A549 (cell line): ENCODE measurements at regions of chr10 and their contacts with region 1.

Region 1: DNA sequence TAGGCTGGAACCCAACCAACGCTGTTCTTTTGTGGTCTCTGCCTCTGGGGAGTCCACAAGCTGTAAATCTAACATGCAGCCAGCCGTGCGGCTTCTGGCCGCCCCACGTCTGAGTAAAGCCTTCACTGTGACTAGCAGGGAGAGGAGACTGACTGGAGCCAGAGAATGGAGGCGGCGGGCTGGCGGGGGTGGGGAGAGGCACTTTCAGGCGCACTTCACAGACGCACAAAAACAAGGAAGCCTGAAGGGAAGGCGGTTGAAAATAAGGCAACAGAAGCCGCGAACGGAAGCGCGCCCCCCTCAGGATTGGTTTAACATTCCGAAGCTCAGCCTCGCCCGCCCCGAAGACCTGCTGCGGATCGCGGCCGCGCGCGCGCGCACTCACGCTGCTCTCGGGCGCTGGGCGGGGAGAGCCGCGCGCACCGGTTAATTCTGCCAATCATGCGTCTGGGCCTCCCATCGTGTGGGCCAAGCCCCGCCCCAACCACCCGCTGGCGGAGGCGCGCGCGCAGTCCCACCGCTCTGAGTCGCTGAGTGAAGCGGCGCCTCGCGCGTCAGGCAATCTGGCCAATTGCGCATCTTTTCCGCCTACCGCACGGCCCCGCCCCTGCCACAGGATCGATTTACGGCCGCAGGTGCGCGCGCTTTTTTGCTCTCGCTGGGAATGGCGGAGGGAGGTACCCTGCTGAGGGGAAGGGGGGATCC is at the start of gene SFR1:
- DNase-seq: peak; percentile 87 to 99
- ATAC-seq: peak; percentile 82 to 88
- H3K4me3 ChIP-seq: peak within 1 kb of the TSS; percentile 88
- H3K27ac ChIP-seq: peak within 1 kb of the TSS; percentile 98
- H3K4me1 ChIP-seq: peaks cover 51% of the 10 kb centered on the region
- CTCF ChIP-seq: peak; percentile 69
- EP300 ChIP-seq: no peak
- POLR2A ChIP-seq: peak; percentile 84
- RAD21 ChIP-seq: peak; percentile 67 to 83
- polyA plus RNA-seq, gene SFR1: 11.2 and 17.6 TPM in 2 replicates

Region 2: GRCh38 chr10:104045151-104046089 is 76.3 kb before region 1 on chr10:
- CTCF ChIA-PET with region 1: interaction called, 166 read pairs
- POLR2A ChIA-PET with region 1: interaction called, 32 read pairs
- DNase-seq: peak; percentile 78 to 86
- ATAC-seq: peak; percentile 87 to 96
- H3K4me3 ChIP-seq: no peak overlapping the region
- H3K27ac ChIP-seq: peak overlapping the region; percentile 48 to 79; a peak in 5 of 6 replicates
- H3K4me1 ChIP-seq: peaks cover 27% of the 10 kb centered on the region
- CTCF ChIP-seq: peak; percentile 93
- EP300 ChIP-seq: no peak
- POLR2A ChIP-seq: no peak
- RAD21 ChIP-seq: peak; percentile 99

Region 3: DNA sequence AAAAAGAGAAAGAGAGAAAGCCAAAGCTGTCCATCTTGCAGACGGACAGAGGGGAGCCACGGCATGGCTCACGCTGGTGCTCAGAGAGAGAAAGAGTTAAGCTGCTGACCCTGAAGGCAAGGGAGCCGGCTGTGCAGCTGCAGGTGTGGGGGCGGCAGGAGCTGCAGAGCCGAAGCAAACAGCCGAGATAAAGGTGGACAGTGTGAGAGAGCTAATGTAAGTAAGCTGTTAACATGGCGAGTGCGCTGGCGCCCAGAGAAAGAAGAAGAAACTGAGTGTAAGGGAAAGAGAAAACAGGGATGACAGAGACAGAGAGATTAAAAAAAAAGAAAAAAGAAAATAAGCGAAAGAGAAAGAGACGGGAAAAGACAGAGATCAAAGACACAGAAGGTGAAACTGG is 54.1 kb before region 1 on chr10:
- CTCF ChIA-PET with region 1: interaction called, 10 read pairs
- POLR2A ChIA-PET with region 1: interaction called, 8 read pairs
- DNase-seq: no peak
- ATAC-seq: no peak
- H3K4me3 ChIP-seq: no peak overlapping the region
- H3K27ac ChIP-seq: no peak overlapping the region
- H3K4me1 ChIP-seq: no peaks in the 10 kb centered on the region
- CTCF ChIP-seq: no peak
- EP300 ChIP-seq: no peak
- POLR2A ChIP-seq: no peak
- RAD21 ChIP-seq: no peak

Region 4: GRCh38 chr10:104090611-104091010 is 31.1 kb before region 1 on chr10:
- CTCF ChIA-PET with region 1: interaction called, 15 read pairs
- POLR2A ChIA-PET with region 1: interaction called, 5 read pairs
- DNase-seq: no peak
- ATAC-seq: no peak
- H3K4me3 ChIP-seq: no peak overlapping the region
- H3K27ac ChIP-seq: no peak overlapping the region
- H3K4me1 ChIP-seq: peaks cover under 1% of the 10 kb centered on the region; the same call in 1 of the 3 replicates
- CTCF ChIP-seq: no peak
- EP300 ChIP-seq: no peak
- POLR2A ChIP-seq: no peak
- RAD21 ChIP-seq: no peak

Region 5: GRCh38 chr10:104109908-104110662 is 11.6 kb before region 1 on chr10:
- CTCF ChIA-PET with region 1: interaction called, 24 read pairs
- POLR2A ChIA-PET with region 1: interaction called, 59 read pairs
- DNase-seq: peak; percentile 62 to 92
- ATAC-seq: peak; percentile 98 to 99
- H3K4me3 ChIP-seq: no peak overlapping the region
- H3K27ac ChIP-seq: peak overlapping the region; percentile 89 to 93
- H3K4me1 ChIP-seq: peaks cover 33% of the 10 kb centered on the region
- CTCF ChIP-seq: no peak
- EP300 ChIP-seq: peak in 1 of 2 experiments; percentile 46; a peak in 2 of 5 replicates
- POLR2A ChIP-seq: no peak
- RAD21 ChIP-seq: 0 out of 5 replicates have a peak, but pooled peaks of 1 of the 2 experiments have one; percentile 35

Region 6: DNA sequence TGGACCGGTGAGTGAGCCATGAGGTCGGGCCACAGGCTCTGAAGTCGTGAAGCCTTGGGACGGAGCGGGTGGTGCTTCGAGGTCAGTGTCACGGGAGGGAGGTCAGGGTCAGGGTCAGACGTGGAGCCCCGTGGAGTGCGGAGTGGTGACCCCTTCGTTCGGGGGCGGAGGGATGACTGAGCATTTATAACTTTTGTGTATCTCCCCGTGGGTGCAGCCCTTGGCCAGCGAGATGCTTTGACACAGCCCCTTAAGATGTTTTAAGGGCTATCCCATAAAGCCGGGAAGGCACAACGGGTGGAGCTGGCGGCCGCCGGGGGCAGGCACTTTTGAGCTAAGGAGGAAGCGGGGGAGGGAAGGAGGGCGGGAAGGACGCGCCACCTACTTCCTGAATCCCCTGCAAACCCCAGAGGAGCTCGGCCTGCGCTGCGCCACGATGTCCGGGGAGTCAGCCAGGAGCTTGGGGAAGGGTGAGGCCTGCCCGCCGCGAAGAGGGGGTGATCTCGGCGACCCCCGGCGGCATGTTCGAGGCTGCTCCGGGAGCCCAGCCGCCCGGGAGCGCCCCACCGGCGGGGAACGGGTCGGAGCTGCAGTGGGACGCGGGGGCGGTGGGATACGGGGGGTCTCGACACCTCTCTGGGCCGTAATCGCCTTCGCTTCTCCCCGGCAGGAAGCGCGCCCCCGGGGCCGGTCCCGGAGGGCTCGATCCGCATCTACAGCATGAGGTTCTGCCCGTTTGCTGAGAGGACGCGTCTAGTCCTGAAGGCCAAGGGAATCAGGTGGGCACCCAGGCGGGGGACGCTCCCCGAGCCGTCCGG is 133.0 kb after region 1 on chr10 and contains the start of gene GSTO1:
- CTCF ChIA-PET with region 1: interaction called, 4 read pairs
- POLR2A ChIA-PET with region 1: interaction called, 11 read pairs
- DNase-seq: peak; percentile 77 to 79
- ATAC-seq: peak; percentile 89 to 95
- H3K4me3 ChIP-seq: peak within 1 kb of the TSS; percentile 99
- H3K27ac ChIP-seq: peak within 1 kb of the TSS; percentile 98 to 99
- H3K4me1 ChIP-seq: peaks cover 25% of the 10 kb centered on the region
- CTCF ChIP-seq: no peak
- EP300 ChIP-seq: no peak
- POLR2A ChIP-seq: peak; percentile 90
- RAD21 ChIP-seq: 0 out of 5 replicates have a peak, but pooled peaks of 1 of the 2 experiments have one; percentile 9
- polyA plus RNA-seq, gene GSTO1: 172 and 204 TPM in 2 replicates